Left colon (tissue), 2 donors: ENCODE measurements at regions of chr3 and their contacts with region 1.

Region 1: DNA sequence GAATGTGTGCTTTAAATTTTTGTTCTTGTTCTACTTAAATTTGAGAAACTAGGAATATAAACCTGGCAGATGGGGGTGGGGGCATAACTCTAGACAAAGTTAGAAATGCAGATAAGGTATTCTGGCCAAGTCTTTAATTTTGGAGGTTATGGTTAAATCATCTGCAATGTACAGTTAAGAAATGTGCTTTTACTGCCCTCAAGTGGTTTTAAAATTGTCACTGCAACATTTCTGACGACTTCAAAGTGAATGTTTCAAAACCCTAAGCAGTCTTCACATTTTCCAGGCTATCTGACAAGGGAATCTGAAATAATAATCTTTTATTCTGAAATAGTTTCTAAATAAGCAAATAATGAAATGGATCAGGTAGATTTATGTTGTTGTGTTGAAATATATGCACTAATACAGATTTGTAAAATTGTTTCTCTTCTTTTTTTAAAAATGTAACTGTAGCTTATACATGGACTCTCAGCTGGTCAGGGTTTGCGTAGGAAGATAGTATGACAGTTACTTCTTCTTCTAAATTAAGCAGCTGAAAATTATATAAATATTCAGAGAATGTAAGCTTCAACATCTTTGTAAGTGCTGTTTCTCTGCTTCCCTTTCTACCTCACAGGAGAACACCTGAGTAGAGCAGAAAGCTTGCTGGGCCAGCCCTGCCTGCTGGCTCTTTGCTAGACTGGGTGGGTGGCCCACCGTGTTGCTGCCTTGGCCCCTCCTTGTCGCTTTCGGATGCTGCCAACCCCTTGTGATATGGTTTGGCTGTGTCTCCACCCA is 45.0 kb downstream of the SUCNR1 start:
- DNase-seq: no peak
- ATAC-seq: peak; percentile 74

Region 2: GRCh38 chr3:151468284-151468917 is 450.0 kb before region 1 on chr3:
- intact Hi-C with region 1: loop called in 1 of 2 experiments (anchors 10 kb)
- DNase-seq: no peak
- ATAC-seq: peak; percentile 78